Endothelial cell of umbilical vein (primary cell): ENCODE measurements at regions of chr3 and their contacts with region 1.

Region 1: DNA sequence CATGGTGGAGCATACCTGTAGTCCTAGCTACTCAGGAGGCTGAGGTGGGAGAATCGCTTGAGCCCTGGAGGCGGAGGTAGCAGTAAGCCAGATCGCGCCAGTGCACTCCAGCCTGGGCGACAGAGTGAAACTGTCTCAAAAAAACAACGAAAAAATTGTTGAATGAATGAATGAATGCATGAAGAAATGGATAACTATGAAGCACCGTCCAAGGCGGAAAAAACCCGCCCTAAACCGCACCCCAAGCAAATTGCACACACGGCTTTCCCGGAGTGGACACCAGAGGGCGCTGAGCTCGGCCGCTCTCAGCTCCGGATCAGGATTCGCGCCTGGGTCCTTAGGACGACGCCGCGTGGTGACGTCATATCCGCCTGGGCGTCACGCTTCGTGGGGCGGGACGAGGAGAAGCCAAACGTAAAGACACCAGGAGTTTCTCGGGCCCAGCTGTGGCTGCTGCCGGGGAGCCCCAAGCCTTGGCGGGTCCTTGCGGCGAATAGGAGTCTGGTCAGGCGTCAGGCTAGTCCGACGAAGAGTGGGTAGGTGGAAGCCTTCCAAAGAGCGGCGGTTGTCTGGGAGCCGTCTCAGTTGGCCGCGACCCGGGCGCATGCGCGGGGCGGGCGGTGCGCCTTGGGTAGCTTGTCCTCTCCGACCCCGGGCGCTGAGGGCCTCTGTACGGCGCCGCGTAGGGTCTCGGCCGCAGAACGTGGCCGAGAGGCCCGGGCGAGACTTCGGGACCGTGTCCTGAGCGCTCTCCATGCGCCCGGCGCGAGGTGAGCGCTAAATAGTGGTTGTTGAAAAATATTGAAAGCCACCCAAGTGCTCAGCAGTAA is at the starts of genes HTD2 and RPP14:
- DNase-seq: peak; percentile 98
- H3K4me3 ChIP-seq: peak within 1 kb of the TSS; percentile 81 to 98 (median 94)
- H3K27ac ChIP-seq: peak within 1 kb of the TSS; percentile 96
- H3K4me1 ChIP-seq: peaks cover 19% of the 10 kb centered on the region
- H3K27me3 ChIP-seq: peaks cover 15 to 16% of the 10 kb centered on the region in 2 experiments
- CTCF ChIP-seq: peak; percentile 98
- POLR2A ChIP-seq: peak; percentile 92
- total RNA-seq, gene HTD2: 10.0 and 10.3 TPM in 2 replicates
- total RNA-seq, gene RPP14: 18.1 and 21.3 TPM in 2 replicates

Region 2: GRCh38 chr3:58200846-58201355 is 105.2 kb before region 1 on chr3:
- CTCF ChIA-PET with region 1: interaction called, 11 read pairs
- POLR2A ChIA-PET with region 1: no interaction called
- dilution Hi-C with region 1: loop called (anchors 10 kb)
- intact Hi-C with region 1: no loop called
- DNase-seq: peak; percentile 51
- H3K4me3 ChIP-seq: no peak overlapping the region
- H3K27ac ChIP-seq: no peak overlapping the region
- H3K4me1 ChIP-seq: peaks cover 21% of the 10 kb centered on the region
- H3K27me3 ChIP-seq: no peaks in the 10 kb centered on the region
- CTCF ChIP-seq: no peak
- POLR2A ChIP-seq: no peak

Region 3: GRCh38 chr3:58317811-58318210 is 11.7 kb after region 1 on chr3:
- CTCF ChIA-PET with region 1: interaction called, 34 read pairs
- POLR2A ChIA-PET with region 1: no interaction called
- dilution Hi-C with region 1: no loop called
- intact Hi-C with region 1: no loop called
- DNase-seq: no peak
- H3K4me3 ChIP-seq: no peak overlapping the region
- H3K27ac ChIP-seq: no peak overlapping the region
- H3K4me1 ChIP-seq: no peaks in the 10 kb centered on the region
- H3K27me3 ChIP-seq: no peaks in the 10 kb centered on the region
- CTCF ChIP-seq: no peak
- POLR2A ChIP-seq: no peak

Region 4: DNA sequence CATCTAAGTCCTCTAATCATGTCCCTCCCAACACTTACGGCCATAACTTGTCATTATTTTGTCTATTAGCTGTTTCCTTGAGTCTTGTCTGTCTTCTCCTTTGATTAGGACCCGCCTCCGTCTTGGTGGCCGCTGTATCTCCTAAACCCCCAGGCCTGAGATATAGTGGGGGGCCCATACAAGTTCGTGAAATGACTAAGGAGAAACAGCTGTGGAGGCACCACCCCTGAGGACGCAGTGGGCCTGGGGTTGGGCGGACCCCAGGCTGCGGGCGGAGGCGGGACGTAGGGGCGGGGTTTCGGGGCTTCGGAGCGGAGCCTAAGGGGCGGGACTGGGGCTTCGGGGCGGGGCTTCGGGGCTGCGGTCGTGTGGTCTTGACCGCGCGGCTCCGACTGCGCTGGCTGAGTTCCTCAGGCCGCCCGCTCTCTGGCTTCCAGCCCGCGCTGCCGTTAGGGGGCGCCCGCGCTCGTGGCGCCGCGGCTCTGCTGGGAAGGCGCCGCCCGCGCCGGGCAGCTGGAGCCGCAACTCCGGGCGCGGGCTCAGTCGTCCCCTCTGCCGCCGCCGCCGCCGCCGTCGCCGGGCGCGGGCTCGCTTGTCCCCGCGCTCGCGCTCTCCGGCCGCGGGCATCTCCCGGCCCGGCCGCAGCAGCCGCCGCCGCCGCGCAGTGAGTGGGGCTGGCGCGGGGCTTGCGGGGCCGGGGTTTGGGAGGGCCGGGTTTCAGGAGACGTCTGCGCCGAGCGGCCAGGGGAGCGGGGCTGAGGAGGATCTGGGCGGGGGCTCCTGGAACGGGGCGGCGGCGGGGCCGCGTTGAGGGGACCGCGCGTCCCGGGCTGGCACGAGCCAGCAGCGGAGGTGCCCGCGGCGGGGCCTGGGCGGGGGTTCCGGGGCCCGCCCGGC is 185.7 kb after region 1 on chr3 and contains the start of gene KCTD6:
- CTCF ChIA-PET with region 1: interaction called, 20 read pairs
- POLR2A ChIA-PET with region 1: no interaction called
- dilution Hi-C with region 1: no loop called
- intact Hi-C with region 1: loop called (anchors 1 kb)
- DNase-seq: peak; percentile 97
- H3K4me3 ChIP-seq: peak within 1 kb of the TSS; percentile 67 to 90 (median 86)
- H3K27ac ChIP-seq: peak within 1 kb of the TSS; percentile 21
- H3K4me1 ChIP-seq: peaks cover 16% of the 10 kb centered on the region
- H3K27me3 ChIP-seq: peaks cover 2 to 5% of the 10 kb centered on the region in 2 experiments
- CTCF ChIP-seq: peak; percentile 79 to 80
- POLR2A ChIP-seq: no peak
- total RNA-seq, gene KCTD6: 6.4 and 7.4 TPM in 2 replicates

Region 5: GRCh38 chr3:58560771-58561311 is 254.7 kb after region 1 on chr3:
- CTCF ChIA-PET with region 1: interaction called, 13 read pairs
- POLR2A ChIA-PET with region 1: no interaction called
- dilution Hi-C with region 1: no loop called
- intact Hi-C with region 1: no loop called
- DNase-seq: peak; percentile 91
- H3K4me3 ChIP-seq: no peak overlapping the region
- H3K27ac ChIP-seq: peak overlapping the region; percentile 45
- H3K4me1 ChIP-seq: peaks cover 35% of the 10 kb centered on the region
- H3K27me3 ChIP-seq: no peaks in the 10 kb centered on the region
- CTCF ChIP-seq: peak; percentile 58 to 71
- POLR2A ChIP-seq: peak; percentile 40